ENCODE measurements at regions of chr12 and their contacts with region 1.

Region 1: GRCh38 chr12:60494244-60494643 is 898.4 kb downstream of the SLC16A7 start:
- DNase-seq: no peak
- H3K4me3 ChIP-seq: no peak overlapping the region
- H3K27ac ChIP-seq: no peak overlapping the region
- H3K4me1 ChIP-seq: no peaks in the 10 kb centered on the region
- H3K27me3 ChIP-seq: no peaks in the 10 kb centered on the region
- CTCF ChIP-seq: peak in 1 of 3 experiments; percentile 28
- POLR2A ChIP-seq: no peak

Region 2: DNA sequence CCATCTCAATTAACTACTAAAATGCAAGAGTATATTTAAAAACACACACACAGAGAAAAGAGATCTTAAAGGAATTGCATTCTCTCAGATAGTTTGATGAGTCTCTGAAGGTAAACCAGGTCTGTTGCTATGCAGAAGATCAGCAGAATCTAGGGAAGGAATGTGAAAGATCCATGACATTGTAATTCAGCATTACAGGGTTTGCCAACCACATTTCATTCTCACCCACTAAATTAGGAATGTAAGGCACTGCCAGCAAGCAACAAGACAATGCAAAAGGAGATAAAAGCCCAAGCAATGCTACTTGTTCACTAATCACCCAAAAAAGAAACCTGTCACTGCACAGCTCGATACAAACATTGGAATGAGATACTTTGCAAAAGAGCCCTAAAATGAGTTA is 1680.2 kb before region 1 on chr12:
- intact Hi-C with region 1: loop called (anchors 5 kb)
- DNase-seq: no peak
- H3K4me3 ChIP-seq: no peak overlapping the region
- H3K27ac ChIP-seq: no peak overlapping the region
- H3K4me1 ChIP-seq: no peaks in the 10 kb centered on the region
- H3K27me3 ChIP-seq: no peaks in the 10 kb centered on the region
- CTCF ChIP-seq: no peak
- POLR2A ChIP-seq: no peak

Measured in vagina (tissue), 2 donors.